Transverse colon (tissue), 4 donors: ENCODE measurements at regions of chr3 and their contacts with region 1.

Region 1: GRCh38 chr3:14947886-14948555 is 638 bp downstream of the NR2C2 start:
- DNase-seq: peak; percentile 98
- H3K4me3 ChIP-seq: peak overlapping the region; percentile 81 to 97 (median 89)
- H3K27ac ChIP-seq: peak overlapping the region; percentile 99 to 100 (median 99)
- H3K4me1 ChIP-seq: peaks cover 19 to 67% (median 31%) of the 10 kb centered on the region in 4 donors
- H3K27me3 ChIP-seq: no peaks in the 10 kb centered on the region
- CTCF ChIP-seq: no peak
- EP300 ChIP-seq: no peak
- POLR2A ChIP-seq: peak; percentile 45

Region 2: DNA sequence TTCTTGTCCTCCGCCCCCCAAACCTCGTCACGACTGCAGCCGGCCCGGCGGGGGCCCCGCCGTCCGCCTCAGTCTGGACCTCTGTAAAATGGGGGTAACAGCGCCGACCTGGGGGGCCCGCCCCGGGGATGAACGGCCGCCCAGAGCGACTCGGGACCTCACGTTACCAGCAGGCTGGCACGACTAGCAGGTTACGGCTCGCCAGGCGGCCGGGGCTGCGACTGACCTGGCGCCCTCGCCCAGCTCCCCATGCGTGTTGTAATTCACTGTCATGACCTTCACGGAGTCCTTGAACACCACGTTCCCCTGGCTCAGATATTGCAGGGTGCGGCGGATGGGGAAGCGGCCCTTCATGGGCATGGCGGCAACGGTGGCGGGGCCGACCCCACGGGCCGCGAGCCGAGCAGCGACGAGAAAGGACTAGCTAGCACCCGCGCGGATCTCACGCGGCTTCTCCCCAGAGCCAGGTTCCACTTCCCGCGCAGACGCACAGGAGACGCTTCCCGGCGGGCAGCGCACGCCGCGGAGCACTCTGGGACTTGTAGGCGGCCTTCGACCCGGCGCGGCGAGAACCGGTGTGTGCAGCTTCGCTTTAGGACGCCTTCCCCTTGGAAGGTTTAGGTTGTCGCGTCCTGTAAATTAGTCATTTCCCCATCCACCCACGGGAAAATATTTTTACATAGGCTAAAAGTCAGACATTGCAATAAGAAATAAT is 117.0 kb after region 1 on chr3 and contains the start of gene MRPS25:
- in situ Hi-C with region 1: no loop called
- intact Hi-C with region 1: loop called (anchors 10 kb)
- DNase-seq: peak; percentile 92
- H3K4me3 ChIP-seq: peak within 1 kb of the TSS; percentile 67 to 89 (median 82)
- H3K27ac ChIP-seq: peak within 1 kb of the TSS; percentile 83 to 86 (median 86)
- H3K4me1 ChIP-seq: peaks cover 12 to 17% (median 14%) of the 10 kb centered on the region in 4 donors
- H3K27me3 ChIP-seq: no peaks in the 10 kb centered on the region
- CTCF ChIP-seq: no peak
- EP300 ChIP-seq: no peak
- POLR2A ChIP-seq: peak; percentile 91
- total RNA-seq, gene MRPS25: 47.5 to 209 (median 117) TPM